Esophagus squamous epithelium (tissue), 5 donors: ENCODE measurements at regions of chr3 and their contacts with region 1.

Region 1: DNA sequence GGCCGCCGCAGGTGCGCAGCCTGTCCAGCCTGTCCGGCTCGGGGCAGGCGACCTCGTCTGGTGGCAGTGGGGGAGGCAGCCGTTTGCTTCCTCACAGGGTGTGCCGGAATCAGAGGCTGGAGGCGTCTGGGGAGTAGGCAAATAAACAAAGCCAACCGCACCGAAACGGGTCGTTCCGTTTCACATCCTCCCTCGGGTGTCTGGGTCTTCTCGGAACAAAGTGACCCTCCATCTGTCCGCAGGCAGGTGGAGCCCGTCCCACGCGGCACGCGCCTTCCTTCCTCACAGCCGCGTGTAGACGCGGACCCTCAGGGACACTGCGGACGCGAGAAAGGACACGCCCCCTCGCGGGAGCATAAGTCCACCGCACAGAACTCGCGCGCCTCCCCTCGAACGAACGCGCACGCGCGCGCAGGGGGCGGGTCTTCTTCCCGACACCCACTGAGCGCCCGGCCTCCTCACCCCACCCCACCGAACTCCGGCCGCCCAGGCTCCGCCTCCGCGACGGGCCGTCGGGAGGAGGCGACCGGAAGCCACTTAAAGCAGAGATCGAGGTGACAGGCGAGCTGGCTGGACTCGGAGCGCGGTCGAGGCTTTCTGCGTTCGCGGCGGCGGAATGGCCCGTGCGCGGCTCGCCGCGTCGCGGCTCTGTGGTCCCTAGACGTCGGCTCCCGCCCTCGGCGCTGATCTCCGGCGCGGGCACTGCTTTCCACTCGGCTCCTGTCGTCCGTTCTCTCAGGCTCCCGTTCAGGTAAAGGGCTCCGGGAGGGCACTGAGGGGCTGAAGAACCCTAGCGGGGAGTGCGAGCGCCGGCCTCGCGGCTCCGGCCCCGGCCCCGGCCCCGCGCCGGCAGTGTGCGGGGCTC is at the start of gene TIPARP:
- DNase-seq: peak; percentile 94
- H3K4me3 ChIP-seq: peak within 1 kb of the TSS; percentile 86 to 98 (median 92)
- H3K27ac ChIP-seq: peak within 1 kb of the TSS; percentile 97 to 99 (median 98)
- H3K4me1 ChIP-seq: peaks cover 11 to 41% (median 26%) of the 10 kb centered on the region in 3 donors
- H3K27me3 ChIP-seq: no peaks in the 10 kb centered on the region
- CTCF ChIP-seq: peak; percentile 53 to 93 (median 71)
- POLR2A ChIP-seq: peak in 3 of 4 donors; percentile 98 to 100 (median 99)
- total RNA-seq, gene TIPARP: 28.0 to 40.4 (median 38.0) TPM

Region 2: DNA sequence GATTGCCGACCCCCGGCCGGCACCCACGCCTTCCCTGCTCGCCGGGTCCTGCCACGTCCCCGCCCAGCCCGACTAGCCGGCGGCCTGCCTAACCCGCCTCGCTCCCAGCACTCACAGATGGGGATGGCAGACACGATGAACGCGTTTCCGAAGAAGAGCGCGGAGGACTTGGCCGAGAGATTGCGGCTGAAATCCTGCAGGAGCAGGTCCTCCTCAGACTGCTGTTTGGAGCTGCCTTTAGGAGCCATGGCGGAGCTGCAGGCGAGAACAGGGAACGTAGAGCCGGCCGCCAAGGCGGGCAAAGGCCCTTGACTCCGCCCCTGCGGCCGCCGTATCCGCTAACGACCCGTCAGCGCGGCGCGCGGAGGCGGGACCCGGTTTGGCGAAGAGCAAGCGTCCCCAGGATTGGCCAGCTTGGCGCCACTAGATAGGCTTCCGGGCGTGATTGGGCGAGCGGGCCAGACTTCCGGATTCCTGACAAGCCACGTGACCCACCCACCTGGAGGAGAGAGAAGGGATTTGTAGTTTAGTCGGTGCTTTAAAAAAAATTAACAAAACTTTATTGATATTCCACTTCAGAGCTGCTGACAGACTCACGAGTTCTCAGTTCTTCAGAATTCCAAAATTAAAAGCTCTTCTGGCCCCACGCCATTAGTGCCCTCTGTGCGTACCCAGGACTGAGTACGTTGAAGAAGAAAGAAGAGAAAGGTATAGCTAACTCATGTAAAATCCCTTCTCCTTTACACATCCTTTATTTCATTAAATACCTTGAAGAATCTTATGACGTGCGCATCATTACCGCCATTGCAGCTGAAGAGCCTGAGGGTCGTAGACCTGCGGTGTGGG is 119.2 kb before region 1 on chr3 and contains the start of gene SSR3:
- intact Hi-C with region 1: loop called (anchors 10 kb)
- DNase-seq: peak; percentile 93
- H3K4me3 ChIP-seq: peak within 1 kb of the TSS; percentile 75 to 94 (median 86)
- H3K27ac ChIP-seq: peak within 1 kb of the TSS; percentile 84 to 92 (median 90)
- H3K4me1 ChIP-seq: peaks cover 8 to 43% (median 16%) of the 10 kb centered on the region in 3 donors
- H3K27me3 ChIP-seq: no peaks in the 10 kb centered on the region
- CTCF ChIP-seq: peak; percentile 11 to 76 (median 48)
- POLR2A ChIP-seq: peak in 2 of 4 donors; percentile 75 to 90
- total RNA-seq, gene SSR3: 42.5 to 74.7 (median 57.1) TPM

Region 3: DNA sequence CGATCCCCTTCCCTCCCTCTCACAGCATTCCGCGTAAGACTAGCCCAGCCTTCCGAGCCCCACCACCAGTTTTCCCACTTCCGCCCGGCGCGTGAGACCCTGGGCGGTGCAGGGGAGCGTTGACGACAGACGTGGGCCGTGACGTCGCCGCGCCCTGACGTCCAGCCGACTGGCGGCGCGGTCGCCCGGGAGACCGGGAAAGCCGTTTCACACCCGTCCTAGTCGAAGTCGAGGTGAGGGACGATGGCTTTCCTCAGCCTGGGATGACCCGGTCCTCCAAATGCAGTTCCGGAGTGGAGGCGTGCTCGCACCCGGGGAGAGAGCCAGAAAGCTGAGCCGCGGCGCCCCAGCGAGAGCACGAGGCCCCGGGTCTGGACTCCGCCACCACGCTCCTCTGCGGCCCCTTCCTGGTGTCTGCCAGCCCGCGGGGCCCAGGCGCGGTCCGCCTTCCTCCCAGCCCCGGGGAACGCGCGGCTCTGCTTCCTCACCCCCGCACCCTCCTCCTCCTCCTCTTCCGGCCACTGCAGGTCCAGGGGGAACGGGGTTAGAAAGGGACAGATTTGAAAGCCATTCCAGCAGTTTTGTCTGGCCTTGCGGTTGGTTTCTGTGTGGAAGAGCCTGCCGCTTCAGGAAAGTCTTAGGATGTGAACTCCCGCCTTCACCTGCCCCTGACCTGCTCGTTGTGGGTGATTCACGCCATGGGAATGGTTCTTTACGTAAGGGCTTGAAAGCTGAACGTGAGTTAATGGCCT is 152.0 kb after region 1 on chr3 and contains the start of gene LEKR1:
- intact Hi-C with region 1: loop called (anchors 10 kb)
- DNase-seq: no peak
- H3K4me3 ChIP-seq: peak within 1 kb of the TSS; percentile 56 to 87 (median 80)
- H3K27ac ChIP-seq: peak within 1 kb of the TSS; percentile 96 to 99 (median 96)
- H3K4me1 ChIP-seq: peaks cover 0 to 25% (median 3%) of the 10 kb centered on the region in 3 donors
- H3K27me3 ChIP-seq: no peaks in the 10 kb centered on the region
- CTCF ChIP-seq: peak in 1 of 6 experiments; percentile 4
- POLR2A ChIP-seq: peak in 2 of 4 donors; percentile 62 to 72
- total RNA-seq, gene LEKR1: 0.15 to 1.1 (median 0.57) TPM in 3 of 4 donors, not detected in the other

Region 4: DNA sequence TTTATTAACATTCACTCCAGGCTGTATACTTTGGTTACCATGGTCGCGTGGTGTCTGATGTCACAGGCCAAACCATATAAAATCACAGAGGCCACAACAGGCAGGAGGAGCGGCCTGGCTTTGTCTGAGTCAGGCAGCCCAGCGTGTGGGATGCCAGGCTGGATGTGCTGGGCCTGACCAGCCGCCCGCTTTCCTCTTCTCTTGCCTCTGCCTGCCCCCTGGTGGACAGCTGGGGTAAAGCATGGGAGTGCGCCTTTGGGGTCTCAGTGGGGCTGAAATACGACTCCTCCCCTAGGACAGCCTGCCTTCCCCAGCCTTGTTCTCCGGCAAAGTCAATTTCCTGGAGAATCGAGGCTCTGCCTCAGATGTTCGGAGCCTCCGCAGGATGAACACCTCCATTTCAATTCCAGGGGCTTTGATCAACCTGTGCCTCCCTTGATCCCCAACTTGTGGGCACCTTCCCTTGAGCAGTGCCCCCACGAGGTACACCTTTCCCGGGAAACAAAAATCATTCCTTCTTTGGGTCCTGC is 407.5 kb after region 1 on chr3:
- intact Hi-C with region 1: loop called (anchors 5 kb)
- DNase-seq: no peak
- H3K4me3 ChIP-seq: peak overlapping the region in 1 of 4 donors; percentile 16
- H3K27ac ChIP-seq: peak overlapping the region; percentile 34 to 57 (median 44)
- H3K4me1 ChIP-seq: peaks cover 7 to 37% (median 18%) of the 10 kb centered on the region in 3 donors
- H3K27me3 ChIP-seq: no peaks in the 10 kb centered on the region
- CTCF ChIP-seq: peak; percentile 97 to 99 (median 98)
- POLR2A ChIP-seq: no peak

Region 5: GRCh38 chr3:157103280-157103679 is 429.0 kb after region 1 on chr3:
- intact Hi-C with region 1: no loop called
- DNase-seq: no peak
- H3K4me3 ChIP-seq: no peak overlapping the region
- H3K27ac ChIP-seq: peak overlapping the region in 2 of 4 donors; percentile 15 to 52
- H3K4me1 ChIP-seq: peaks cover 14 to 58% (median 42%) of the 10 kb centered on the region in 3 donors
- H3K27me3 ChIP-seq: no peaks in the 10 kb centered on the region
- CTCF ChIP-seq: no peak
- POLR2A ChIP-seq: no peak

Region 6: DNA sequence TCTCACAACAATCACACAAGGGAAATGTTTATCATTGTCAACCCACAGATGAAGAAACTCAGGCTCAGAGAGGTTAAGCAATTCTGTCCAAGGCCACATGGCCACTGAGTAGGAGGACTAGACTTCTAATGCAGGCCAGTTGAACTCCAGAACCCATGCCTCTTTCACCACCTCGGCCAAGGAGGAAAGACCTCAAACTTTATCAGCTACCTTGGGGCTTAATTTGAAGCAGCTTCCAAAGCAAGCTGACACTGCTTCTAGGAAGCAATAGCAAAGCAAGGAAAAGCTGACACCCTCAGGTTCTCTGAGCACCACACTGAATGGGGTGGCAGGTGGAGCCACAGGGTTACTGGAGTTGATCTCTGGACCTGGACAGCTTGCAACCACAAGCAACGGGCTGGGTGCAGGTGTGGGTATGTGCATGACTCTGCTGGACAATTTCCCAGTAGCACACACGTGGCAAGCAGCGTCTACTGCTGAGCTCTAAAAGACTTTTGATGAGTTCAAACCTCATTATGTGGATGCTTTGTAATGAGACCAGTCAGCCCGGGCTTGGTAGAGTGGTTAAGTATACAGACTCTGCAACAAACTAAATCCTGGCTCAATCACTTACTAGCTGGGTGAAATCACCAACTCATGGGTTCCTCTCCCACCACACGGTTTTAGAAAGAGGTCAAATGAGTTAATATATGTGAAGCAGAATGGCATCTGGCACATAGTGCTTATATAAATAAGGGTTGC is 462.5 kb after region 1 on chr3:
- intact Hi-C with region 1: loop called (anchors 2 kb)
- DNase-seq: no peak
- H3K4me3 ChIP-seq: no peak overlapping the region
- H3K27ac ChIP-seq: peak overlapping the region in 3 of 4 donors; percentile 32 to 51 (median 37)
- H3K4me1 ChIP-seq: peaks cover 9 to 37% (median 19%) of the 10 kb centered on the region in 3 donors
- H3K27me3 ChIP-seq: peaks cover 0 to 41% (median 0%) of the 10 kb centered on the region in 4 donors
- CTCF ChIP-seq: no peak
- POLR2A ChIP-seq: no peak